Mammary epithelial cell (primary cell): ENCODE measurements at regions of chr19 and their contacts with region 1.

Region 1: GRCh38 chr19:54029930-54030490 is 33.7 kb downstream of the VSTM1 start:
- DNase-seq: peak; percentile 28
- H3K4me3 ChIP-seq: no peak overlapping the region
- H3K27ac ChIP-seq: no peak overlapping the region
- H3K4me1 ChIP-seq: no peaks in the 10 kb centered on the region
- H3K27me3 ChIP-seq: no peaks in the 10 kb centered on the region
- CTCF ChIP-seq: peak; percentile 30 to 59

Region 2: DNA sequence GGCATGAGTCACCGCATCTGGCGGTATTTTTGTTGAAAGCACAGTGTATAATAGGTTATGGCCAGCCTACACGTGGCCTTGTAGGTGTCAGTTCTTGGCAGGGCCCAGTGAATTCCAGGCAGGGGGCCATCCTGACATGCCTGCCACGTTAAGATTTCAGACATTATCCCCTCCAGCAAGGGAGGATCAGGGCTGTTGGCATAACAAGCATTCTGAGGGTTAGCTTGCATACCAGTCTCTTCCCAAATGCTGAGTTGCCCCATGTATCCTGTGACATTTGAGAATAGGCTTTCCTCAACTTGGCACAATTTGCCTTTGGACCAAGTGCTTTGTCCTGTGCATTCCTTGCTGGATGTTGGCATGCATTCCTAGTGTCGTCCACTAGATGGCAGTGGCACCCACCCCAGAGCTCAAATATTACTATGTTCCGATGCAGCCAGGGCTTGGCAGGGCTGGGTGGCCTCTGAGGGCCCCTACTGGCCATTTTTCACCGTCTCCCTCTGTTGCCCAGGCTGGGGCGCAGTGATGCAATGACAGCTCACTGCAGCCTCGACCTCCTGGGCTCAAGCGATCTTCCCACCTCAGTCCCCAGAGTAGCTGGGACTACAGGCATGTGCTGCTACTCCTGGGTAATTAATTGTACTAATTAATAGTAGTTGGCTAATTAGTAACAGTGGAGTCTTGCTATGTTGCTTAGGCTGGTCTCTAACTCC is 237.1 kb before region 1 on chr19:
- CTCF ChIA-PET with region 1: interaction called, 10 read pairs
- dilution Hi-C with region 1: no loop called
- in situ Hi-C with region 1: no loop called
- intact Hi-C with region 1: no loop called
- DNase-seq: peak; percentile 78
- H3K4me3 ChIP-seq: no peak overlapping the region
- H3K27ac ChIP-seq: no peak overlapping the region
- H3K4me1 ChIP-seq: no peaks in the 10 kb centered on the region
- H3K27me3 ChIP-seq: no peaks in the 10 kb centered on the region
- CTCF ChIP-seq: peak; percentile 83 to 90

Region 3: DNA sequence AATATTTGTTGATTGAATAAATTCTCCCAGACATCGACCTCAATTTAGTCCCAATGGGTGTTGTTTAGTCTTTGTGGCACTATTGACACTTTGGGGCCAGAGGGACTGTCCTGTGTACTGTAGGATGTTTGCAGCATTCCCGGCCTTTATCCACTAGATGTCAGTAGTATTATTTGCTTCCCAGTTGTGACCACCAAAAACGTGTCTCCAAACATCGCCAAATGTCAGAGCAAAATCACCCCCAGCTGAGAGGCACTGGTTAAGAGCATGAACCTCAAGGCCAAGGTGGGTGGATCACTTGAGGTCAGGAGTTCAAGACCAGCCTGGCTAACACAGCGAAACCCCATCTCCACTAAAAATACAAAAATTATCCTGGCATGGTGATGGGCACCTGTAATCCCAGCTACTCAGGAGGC is 221.3 kb before region 1 on chr19:
- CTCF ChIA-PET with region 1: no interaction called
- dilution Hi-C with region 1: no loop called
- in situ Hi-C with region 1: loop called in 1 of 2 experiments (anchors 25 kb)
- intact Hi-C with region 1: no loop called
- DNase-seq: peak; percentile 29
- H3K4me3 ChIP-seq: no peak overlapping the region
- H3K27ac ChIP-seq: no peak overlapping the region
- H3K4me1 ChIP-seq: no peaks in the 10 kb centered on the region
- H3K27me3 ChIP-seq: no peaks in the 10 kb centered on the region
- CTCF ChIP-seq: peak; percentile 36 to 54

Region 4: DNA sequence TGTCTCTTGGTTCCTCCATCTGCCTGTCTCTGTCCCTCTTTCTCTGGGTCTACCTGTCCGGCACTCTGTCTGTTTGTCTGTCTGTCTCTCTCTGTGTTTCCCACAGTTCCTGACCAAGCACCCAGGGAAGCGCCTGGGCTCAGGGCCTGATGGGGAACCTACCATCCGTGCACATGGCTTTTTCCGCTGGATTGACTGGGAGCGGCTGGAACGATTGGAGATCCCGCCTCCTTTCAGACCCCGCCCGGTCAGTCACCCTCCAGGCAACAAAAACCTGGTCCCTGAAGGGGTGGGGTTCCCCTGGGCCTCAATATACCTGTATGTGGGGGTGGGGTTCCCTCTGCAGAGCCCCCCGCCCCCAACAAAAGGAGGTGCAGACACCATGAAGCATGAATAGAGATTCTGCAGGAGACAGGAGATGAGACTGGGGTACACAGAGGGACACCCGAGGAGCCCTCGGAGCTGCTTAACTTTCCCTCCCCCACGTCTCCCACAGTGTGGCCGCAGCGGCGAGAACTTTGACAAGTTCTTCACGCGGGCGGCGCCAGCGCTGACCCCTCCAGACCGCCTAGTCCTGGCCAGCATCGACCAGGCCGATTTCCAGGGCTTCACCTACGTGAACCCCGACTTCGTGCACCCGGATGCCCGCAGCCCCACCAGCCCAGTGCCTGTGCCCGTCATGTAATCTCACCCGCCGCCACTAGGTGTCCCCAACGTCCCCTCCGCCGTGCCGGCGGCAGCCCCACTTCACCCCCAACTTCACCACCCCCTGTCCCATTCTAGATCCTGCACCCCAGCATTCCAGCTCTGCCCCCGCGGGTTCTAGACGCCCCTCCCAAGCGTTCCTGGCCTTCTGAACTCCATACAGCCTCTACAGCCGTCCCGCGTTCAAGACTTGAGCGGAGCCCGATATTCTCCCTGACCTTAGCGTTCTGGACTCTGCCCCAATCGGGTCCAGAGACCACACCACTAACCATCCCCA is 123.5 kb before region 1 on chr19:
- CTCF ChIA-PET with region 1: no interaction called
- dilution Hi-C with region 1: no loop called
- in situ Hi-C with region 1: loop called in 1 of 2 experiments (anchors 10 kb)
- intact Hi-C with region 1: no loop called
- DNase-seq: no peak
- H3K4me3 ChIP-seq: no peak overlapping the region
- H3K27ac ChIP-seq: no peak overlapping the region
- H3K4me1 ChIP-seq: no peaks in the 10 kb centered on the region
- H3K27me3 ChIP-seq: peaks cover 23% of the 10 kb centered on the region
- CTCF ChIP-seq: peak; percentile 50 to 71

Region 5: GRCh38 chr19:53942001-53942786 is 87.8 kb before region 1 on chr19:
- CTCF ChIA-PET with region 1: interaction called, 29 read pairs
- dilution Hi-C with region 1: no loop called
- in situ Hi-C with region 1: no loop called
- intact Hi-C with region 1: no loop called
- DNase-seq: no peak
- H3K4me3 ChIP-seq: no peak overlapping the region
- H3K27ac ChIP-seq: no peak overlapping the region
- H3K4me1 ChIP-seq: no peaks in the 10 kb centered on the region
- H3K27me3 ChIP-seq: peaks cover 2% of the 10 kb centered on the region
- CTCF ChIP-seq: no peak

Region 6: GRCh38 chr19:53961523-53962356 is 68.3 kb before region 1 on chr19:
- CTCF ChIA-PET with region 1: no interaction called
- dilution Hi-C with region 1: no loop called
- in situ Hi-C with region 1: no loop called
- intact Hi-C with region 1: no loop called
- DNase-seq: no peak
- H3K4me3 ChIP-seq: no peak overlapping the region
- H3K27ac ChIP-seq: no peak overlapping the region
- H3K4me1 ChIP-seq: no peaks in the 10 kb centered on the region
- H3K27me3 ChIP-seq: peaks cover 12% of the 10 kb centered on the region
- CTCF ChIP-seq: no peak

Region 7: DNA sequence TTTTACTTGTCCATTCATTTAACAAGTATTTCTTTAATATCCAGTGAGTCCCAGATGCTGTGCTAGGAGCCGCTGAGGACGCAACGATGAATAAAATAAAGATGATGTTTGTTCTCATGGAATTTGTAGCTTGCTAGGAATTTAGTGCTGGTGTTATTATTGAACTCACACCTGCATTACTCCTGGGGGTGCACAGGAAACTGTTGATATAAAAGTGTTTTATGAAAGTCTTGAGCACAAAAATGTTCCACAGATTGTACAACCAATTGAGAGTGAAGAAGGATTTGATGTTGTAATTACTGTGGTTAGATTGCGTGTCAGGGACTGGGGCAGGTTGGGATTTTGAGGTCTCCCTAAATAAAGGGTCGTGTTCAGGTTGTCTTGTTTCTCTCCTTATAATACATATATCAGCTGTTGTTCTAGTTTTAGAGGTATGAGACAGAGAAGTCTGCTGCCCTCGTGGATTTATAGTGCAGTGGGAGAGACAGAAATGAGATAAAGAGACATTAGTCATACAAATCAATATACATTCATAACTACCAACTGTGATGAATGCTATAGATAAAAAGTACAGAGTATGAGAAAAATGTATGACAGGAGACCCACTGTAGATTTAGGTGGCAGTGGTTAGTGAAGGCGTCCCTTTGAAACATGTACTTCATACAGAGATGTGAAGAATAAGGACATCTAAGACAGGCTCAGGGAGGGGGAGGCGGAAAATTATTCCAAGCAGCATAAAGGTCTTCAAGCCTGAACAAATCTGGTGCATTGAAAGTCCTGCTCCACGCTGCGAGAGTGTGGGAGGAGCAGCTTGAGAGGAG is 27.3 kb before region 1 on chr19:
- CTCF ChIA-PET with region 1: no interaction called
- dilution Hi-C with region 1: no loop called
- in situ Hi-C with region 1: no loop called
- intact Hi-C with region 1: no loop called
- DNase-seq: peak; percentile 42
- H3K4me3 ChIP-seq: no peak overlapping the region
- H3K27ac ChIP-seq: no peak overlapping the region
- H3K4me1 ChIP-seq: no peaks in the 10 kb centered on the region
- H3K27me3 ChIP-seq: no peaks in the 10 kb centered on the region
- CTCF ChIP-seq: no peak

Region 8: GRCh38 chr19:54115109-54116063 is 85.4 kb after region 1 on chr19 and contains the starts of genes PRPF31 and TFPT:
- CTCF ChIA-PET with region 1: no interaction called
- dilution Hi-C with region 1: no loop called
- in situ Hi-C with region 1: no loop called
- intact Hi-C with region 1: no loop called
- DNase-seq: peak; percentile 98
- H3K4me3 ChIP-seq: peak within 1 kb of the TSS; percentile 75 to 92 (median 87)
- H3K27ac ChIP-seq: peak within 1 kb of the TSS; percentile 80
- H3K4me1 ChIP-seq: peaks cover 8% of the 10 kb centered on the region
- H3K27me3 ChIP-seq: no peaks in the 10 kb centered on the region
- CTCF ChIP-seq: no peak
- total RNA-seq, gene PRPF31: 34.2 to 56.4 TPM
- total RNA-seq, gene TFPT: 9.3 to 23.2 TPM